HCT116 (cell line): ENCODE measurements at regions of chr5 and their contacts with region 1.

Region 1: DNA sequence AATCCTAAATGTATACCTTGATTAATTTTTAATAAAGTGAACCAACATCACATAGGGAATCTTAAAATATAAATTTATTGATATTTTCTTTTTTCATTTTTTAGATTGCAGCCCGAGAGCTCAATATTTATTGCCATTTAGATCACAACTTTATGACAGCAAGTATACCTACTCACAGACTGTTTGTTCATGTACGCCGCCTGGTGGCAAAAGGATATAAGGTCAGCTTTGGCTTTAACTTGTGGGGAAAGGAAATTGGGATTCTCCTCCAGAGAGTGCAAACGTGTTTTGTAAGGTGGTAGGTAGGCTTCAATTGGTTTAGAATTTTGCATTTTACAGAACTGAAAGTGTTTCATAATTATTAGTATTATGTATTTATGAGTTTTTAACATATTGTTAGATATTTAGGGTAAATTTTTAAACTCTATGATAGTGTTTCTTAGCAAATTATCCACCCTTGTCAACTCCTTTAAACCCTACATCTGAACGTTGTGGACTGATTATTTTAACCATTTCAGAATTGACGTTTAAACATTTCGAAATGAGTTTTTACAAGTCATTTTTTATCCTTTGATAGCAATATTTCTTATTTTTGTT is 17.5 kb upstream of the DHFR start:
- DNase-seq: peak; percentile 54
- ATAC-seq: peak; percentile 90
- H3K4me3 ChIP-seq: no peak overlapping the region
- H3K27ac ChIP-seq: no peak overlapping the region
- H3K4me1 ChIP-seq: no peaks in the 10 kb centered on the region
- H3K27me3 ChIP-seq: no peaks in the 10 kb centered on the region
- CTCF ChIP-seq: peak; percentile 74 to 77 (median 76); a peak in 5 of 6 replicates
- POLR2A ChIP-seq: no peak
- RAD21 ChIP-seq: peak; percentile 80

Region 2: GRCh38 chr5:80346055-80346454 is 326.2 kb before region 1 on chr5:
- CTCF ChIA-PET with region 1: interaction called, 18 read pairs
- POLR2A ChIA-PET with region 1: no interaction called
- RAD21 ChIA-PET with region 1: interaction called, 3 read pairs
- intact Hi-C with region 1: loop called (anchors 5 kb)
- DNase-seq: peak; percentile 48
- ATAC-seq: peak; percentile 92
- H3K4me3 ChIP-seq: no peak overlapping the region
- H3K27ac ChIP-seq: no peak overlapping the region
- H3K4me1 ChIP-seq: peaks cover 0 to 12% of the 10 kb centered on the region in 2 experiments; a peak in 2 of 4 replicates
- H3K27me3 ChIP-seq: no peaks in the 10 kb centered on the region
- CTCF ChIP-seq: peak; percentile 44 to 74 (median 65); a peak in 5 of 6 replicates
- POLR2A ChIP-seq: no peak
- RAD21 ChIP-seq: peak; percentile 68

Region 3: DNA sequence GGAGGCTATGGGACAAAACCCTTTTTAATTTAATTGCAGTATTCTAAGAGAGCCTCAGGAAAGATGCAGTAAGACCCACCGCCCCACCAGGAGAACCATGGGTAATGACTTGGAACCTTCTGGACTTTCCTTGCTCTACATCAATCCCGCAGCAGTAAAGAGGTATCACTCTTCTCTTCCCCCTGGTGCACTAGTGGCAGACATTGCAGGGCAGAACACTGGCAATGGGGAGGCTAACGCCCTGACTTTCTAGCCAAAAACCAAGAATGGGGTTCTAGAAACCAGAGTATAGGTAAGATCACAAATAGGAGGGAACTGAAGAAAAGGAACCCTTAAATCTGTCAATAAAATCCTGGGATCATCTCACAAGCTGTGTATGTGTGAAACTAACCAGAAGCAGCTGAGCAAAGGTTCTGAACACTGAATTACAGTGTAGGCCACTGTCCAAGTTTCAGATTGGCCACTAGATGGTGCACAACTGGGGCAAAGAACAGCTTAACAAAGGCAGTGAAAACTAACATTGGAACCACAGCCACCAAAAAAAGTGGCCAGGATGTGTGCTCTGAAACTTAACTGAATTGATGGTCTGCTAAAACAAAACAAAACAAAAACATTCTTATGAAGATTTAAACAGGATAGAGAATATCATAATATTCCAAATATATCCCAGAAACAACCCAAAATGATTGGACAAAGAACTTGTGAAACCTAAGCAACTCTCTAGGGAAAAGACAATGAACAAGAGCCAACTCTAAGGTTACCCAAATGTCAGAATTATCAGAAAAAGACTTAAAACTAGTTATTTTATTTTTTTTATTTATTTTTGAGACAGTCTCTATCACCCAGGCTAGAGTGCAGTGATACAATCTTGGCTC is 191.0 kb before region 1 on chr5:
- CTCF ChIA-PET with region 1: interaction called, 19 read pairs
- POLR2A ChIA-PET with region 1: no interaction called
- RAD21 ChIA-PET with region 1: interaction called, 3 to 4 read pairs
- intact Hi-C with region 1: loop called (anchors 1 kb)
- DNase-seq: peak; percentile 38
- ATAC-seq: peak; percentile 94
- H3K4me3 ChIP-seq: no peak overlapping the region
- H3K27ac ChIP-seq: no peak overlapping the region
- H3K4me1 ChIP-seq: no peaks in the 10 kb centered on the region
- H3K27me3 ChIP-seq: no peaks in the 10 kb centered on the region
- CTCF ChIP-seq: peak; percentile 63 to 92 (median 92)
- POLR2A ChIP-seq: no peak
- RAD21 ChIP-seq: peak; percentile 61

Region 4: GRCh38 chr5:80487829-80488721 is 184.2 kb before region 1 on chr5 and contains the start of gene FAM151B:
- CTCF ChIA-PET with region 1: interaction called, 3 read pairs
- POLR2A ChIA-PET with region 1: no interaction called
- RAD21 ChIA-PET with region 1: no interaction called
- intact Hi-C with region 1: loop called (anchors 2 kb)
- DNase-seq: peak; percentile 93
- ATAC-seq: peak; percentile 93
- H3K4me3 ChIP-seq: peak within 1 kb of the TSS; percentile 58 to 72
- H3K27ac ChIP-seq: peak within 1 kb of the TSS; percentile 70
- H3K4me1 ChIP-seq: peaks cover 20 to 27% of the 10 kb centered on the region in 2 experiments
- H3K27me3 ChIP-seq: no peaks in the 10 kb centered on the region
- CTCF ChIP-seq: 0 out of 6 replicates have a peak, but pooled peaks of 1 of the 3 experiments have one; percentile 22
- POLR2A ChIP-seq: peak; percentile 55
- RAD21 ChIP-seq: peak; percentile 46; the same call in 1 of the 2 replicates
- total RNA-seq, gene FAM151B: 1.2 TPM

Region 5: DNA sequence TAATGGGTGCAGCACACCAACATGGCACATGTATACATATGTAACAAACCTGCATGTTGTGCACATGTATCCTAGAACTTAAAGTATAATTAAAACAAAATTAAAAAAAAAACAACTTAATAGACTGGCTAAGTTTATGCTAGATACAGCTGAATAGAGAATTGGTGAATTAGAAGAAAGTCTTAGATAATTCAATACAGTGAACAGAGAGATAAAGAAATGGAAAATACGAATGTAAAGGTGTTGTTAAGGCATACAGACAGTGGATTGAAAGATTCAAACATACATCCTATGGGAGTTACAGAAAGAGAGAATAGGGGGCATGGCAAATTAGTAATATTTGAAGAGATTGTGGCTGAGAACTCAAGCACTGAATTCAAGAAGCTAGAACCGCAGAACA is 363.3 kb after region 1 on chr5:
- CTCF ChIA-PET with region 1: no interaction called
- POLR2A ChIA-PET with region 1: no interaction called
- RAD21 ChIA-PET with region 1: no interaction called
- intact Hi-C with region 1: no loop called
- DNase-seq: no peak
- ATAC-seq: no peak
- H3K4me3 ChIP-seq: no peak overlapping the region
- H3K27ac ChIP-seq: no peak overlapping the region
- H3K4me1 ChIP-seq: no peaks in the 10 kb centered on the region
- H3K27me3 ChIP-seq: no peaks in the 10 kb centered on the region
- CTCF ChIP-seq: no peak
- POLR2A ChIP-seq: no peak
- RAD21 ChIP-seq: no peak